HCT116 (cell line): ENCODE measurements at regions of chr12 and their contacts with region 1.

Region 1: DNA sequence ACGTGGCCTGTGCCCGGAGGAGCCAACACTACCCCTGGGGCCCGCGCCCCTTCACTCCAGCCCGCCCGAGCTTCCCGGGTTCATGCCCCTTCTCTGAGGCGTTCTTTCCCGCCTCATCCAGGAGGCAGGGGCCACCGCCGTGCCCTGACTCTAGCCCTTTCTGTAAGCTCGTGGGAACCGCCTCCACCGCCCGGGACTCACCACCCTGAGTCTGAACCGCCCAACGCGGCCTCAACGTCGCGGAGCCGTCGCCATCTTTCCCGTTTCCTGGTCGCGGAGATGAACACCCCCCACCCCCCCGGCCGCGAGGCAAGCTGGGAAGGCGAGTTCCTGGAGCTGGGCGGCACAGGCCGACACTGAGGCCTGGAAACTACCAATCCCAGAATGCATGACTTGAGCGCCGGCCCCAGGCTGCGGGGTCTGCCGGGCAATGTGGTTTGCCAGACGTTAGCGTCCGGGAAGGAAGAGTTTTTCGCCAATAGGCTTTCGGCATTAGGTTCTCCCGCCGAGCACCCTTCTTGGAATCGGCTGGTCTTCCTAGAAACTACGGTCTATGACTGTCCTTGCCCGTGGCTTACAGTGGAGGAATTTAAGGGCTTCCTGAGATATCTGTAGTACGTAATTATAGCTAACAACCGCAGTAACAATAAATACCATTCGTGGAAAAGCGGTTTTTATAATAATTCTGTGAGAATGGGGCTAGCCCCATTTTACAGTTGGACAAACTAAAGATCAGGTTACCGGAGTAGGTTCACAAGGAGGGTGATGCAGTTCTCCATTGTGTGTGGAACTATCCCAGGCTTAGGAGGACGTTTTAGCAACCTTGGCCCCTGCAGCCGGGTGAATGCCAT is at the start of gene DDX23:
- DNase-seq: peak; percentile 91
- ATAC-seq: peak; percentile 98
- H3K4me3 ChIP-seq: peak within 1 kb of the TSS; percentile 96 to 99
- H3K27ac ChIP-seq: peak within 1 kb of the TSS; percentile 63
- H3K4me1 ChIP-seq: peaks cover 10 to 15% of the 10 kb centered on the region in 2 experiments; a peak in 3 of 4 replicates
- H3K27me3 ChIP-seq: no peaks in the 10 kb centered on the region
- CTCF ChIP-seq: no peak
- POLR2A ChIP-seq: peak; percentile 55
- RAD21 ChIP-seq: no peak
- total RNA-seq, gene DDX23: 75.0 TPM

Region 2: DNA sequence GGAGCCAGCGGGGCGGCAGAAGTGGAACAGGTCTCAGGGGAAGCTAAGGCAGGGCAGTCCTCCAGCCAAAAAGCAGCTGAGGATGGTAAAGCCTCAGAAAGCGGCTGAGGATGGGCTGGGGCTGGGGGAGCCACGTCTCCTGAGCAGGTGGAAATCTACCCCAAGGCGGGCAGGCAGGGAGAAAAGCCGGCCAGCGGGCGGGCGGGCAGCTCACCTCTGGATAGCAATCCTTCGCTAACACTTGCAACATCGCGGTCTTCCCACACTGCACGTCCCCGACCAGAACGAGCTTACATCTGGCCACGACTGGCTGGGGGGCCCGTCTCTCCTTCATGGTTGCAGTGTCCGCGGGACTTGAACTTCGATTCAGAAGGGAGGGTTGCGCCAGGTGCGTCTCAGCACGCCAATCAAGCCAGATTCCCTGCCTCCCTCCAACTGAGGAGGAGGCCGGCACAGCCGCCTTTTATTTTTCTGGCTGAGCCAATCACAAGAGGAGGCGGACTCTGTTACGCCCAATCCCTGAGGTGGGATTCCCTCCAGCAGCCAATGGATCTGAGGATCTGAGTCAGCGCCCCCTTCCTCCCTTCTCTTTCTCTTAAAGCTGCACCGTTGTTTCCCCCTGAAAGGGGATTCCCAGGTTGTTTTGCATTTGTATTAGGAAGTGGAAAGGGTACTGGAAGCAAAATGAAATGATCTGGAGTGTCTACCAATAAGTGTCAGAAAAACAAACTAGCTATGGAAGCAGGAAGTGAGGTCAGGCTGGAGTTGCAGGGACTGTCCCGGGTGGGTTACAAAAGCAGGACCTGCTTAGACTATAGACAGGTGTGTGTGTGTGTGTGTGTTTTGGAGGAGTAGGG is 13.6 kb after region 1 on chr12 and contains the start of gene RND1:
- CTCF ChIA-PET with region 1: interaction called, 15 read pairs
- POLR2A ChIA-PET with region 1: interaction called, 28 read pairs
- RAD21 ChIA-PET with region 1: interaction called in 1 of 2 experiments, 4 read pairs
- intact Hi-C with region 1: no loop called
- DNase-seq: peak; percentile 89
- ATAC-seq: peak; percentile 99
- H3K4me3 ChIP-seq: peak within 1 kb of the TSS; percentile 52 to 60
- H3K27ac ChIP-seq: no peak within 1 kb of the TSS
- H3K4me1 ChIP-seq: peaks cover 3 to 18% of the 10 kb centered on the region in 2 experiments; a peak in 2 of 4 replicates
- H3K27me3 ChIP-seq: peaks cover 10% of the 10 kb centered on the region; the same call in 1 of the 2 replicates
- CTCF ChIP-seq: 0 out of 6 replicates have a peak, but pooled peaks of 1 of the 3 experiments have one; percentile 1
- POLR2A ChIP-seq: peak; percentile 98
- RAD21 ChIP-seq: no peak
- total RNA-seq, gene RND1: 2.0 TPM

Region 3: GRCh38 chr12:48890657-48891418 is 38.7 kb after region 1 on chr12:
- CTCF ChIA-PET with region 1: interaction called, 80 read pairs
- POLR2A ChIA-PET with region 1: interaction called, 3 read pairs
- RAD21 ChIA-PET with region 1: interaction called, 11 to 24 read pairs
- intact Hi-C with region 1: loop called (anchors 1 kb)
- DNase-seq: peak; percentile 27
- ATAC-seq: peak; percentile 97
- H3K4me3 ChIP-seq: no peak overlapping the region
- H3K27ac ChIP-seq: no peak overlapping the region
- H3K4me1 ChIP-seq: peaks cover 0 to 12% of the 10 kb centered on the region in 2 experiments; a peak in 2 of 4 replicates
- H3K27me3 ChIP-seq: peaks cover 3% of the 10 kb centered on the region; the same call in 1 of the 2 replicates
- CTCF ChIP-seq: peak; percentile 90 to 93 (median 92)
- POLR2A ChIP-seq: no peak
- RAD21 ChIP-seq: peak; percentile 84

Region 4: GRCh38 chr12:48936379-48936979 is 84.4 kb after region 1 on chr12:
- CTCF ChIA-PET with region 1: interaction called, 18 read pairs
- POLR2A ChIA-PET with region 1: no interaction called
- RAD21 ChIA-PET with region 1: no interaction called
- intact Hi-C with region 1: loop called (anchors 1 kb)
- DNase-seq: peak; percentile 36
- ATAC-seq: peak; percentile 89
- H3K4me3 ChIP-seq: no peak overlapping the region
- H3K27ac ChIP-seq: no peak overlapping the region
- H3K4me1 ChIP-seq: no peaks in the 10 kb centered on the region
- H3K27me3 ChIP-seq: no peaks in the 10 kb centered on the region
- CTCF ChIP-seq: peak; percentile 53 to 96 (median 94); a peak in 5 of 6 replicates
- POLR2A ChIP-seq: no peak
- RAD21 ChIP-seq: peak; percentile 61

Region 5: GRCh38 chr12:48977315-48978281 is 125.5 kb after region 1 on chr12:
- CTCF ChIA-PET with region 1: interaction called, 26 read pairs
- POLR2A ChIA-PET with region 1: no interaction called
- RAD21 ChIA-PET with region 1: interaction called, 3 read pairs
- intact Hi-C with region 1: loop called (anchors 1 kb)
- DNase-seq: no peak
- ATAC-seq: peak; percentile 88
- H3K4me3 ChIP-seq: no peak overlapping the region
- H3K27ac ChIP-seq: no peak overlapping the region
- H3K4me1 ChIP-seq: peaks cover 3 to 12% of the 10 kb centered on the region in 2 experiments; a peak in 3 of 4 replicates
- H3K27me3 ChIP-seq: peaks cover 3% of the 10 kb centered on the region; the same call in 1 of the 2 replicates
- CTCF ChIP-seq: peak; percentile 73 to 94 (median 87)
- POLR2A ChIP-seq: no peak
- RAD21 ChIP-seq: peak; percentile 43

Region 6: DNA sequence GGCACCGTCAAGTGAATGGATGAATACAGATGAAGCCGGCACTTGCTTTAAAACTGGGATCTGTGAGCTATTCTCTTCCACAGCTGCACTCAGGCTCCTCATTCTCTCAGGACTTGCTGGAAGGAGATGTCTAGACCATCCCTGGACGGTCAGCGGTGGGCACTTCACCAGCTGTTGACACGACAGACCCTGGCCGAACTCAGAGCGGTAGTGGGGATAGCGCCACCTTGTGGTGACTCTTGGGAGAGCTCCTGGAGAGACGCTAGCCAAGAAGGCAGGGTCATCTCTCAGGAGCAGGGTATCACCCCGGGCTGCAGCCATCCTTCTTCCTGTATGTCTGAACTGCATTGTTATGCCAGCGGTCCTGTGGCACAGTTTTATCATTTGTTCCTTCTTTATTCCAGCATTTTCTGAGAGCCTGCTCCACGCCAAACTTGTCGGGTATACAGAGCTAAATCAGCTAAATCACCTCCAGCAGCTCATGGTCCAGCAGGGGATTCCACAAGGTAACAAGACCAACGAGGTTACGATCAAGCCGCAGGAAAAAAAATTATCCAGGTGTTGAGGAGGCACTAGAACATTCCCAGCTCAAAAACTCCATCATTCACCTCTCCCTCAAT is 136.0 kb after region 1 on chr12:
- CTCF ChIA-PET with region 1: interaction called, 47 read pairs
- POLR2A ChIA-PET with region 1: interaction called, 3 read pairs
- RAD21 ChIA-PET with region 1: interaction called in 1 of 2 experiments, 6 read pairs
- intact Hi-C with region 1: no loop called
- DNase-seq: no peak
- ATAC-seq: peak; percentile 92
- H3K4me3 ChIP-seq: no peak overlapping the region
- H3K27ac ChIP-seq: no peak overlapping the region
- H3K4me1 ChIP-seq: peaks cover 0 to 14% of the 10 kb centered on the region in 2 experiments; a peak in 3 of 4 replicates
- H3K27me3 ChIP-seq: 0 out of 2 replicates have a peak, but pooled peaks cover 5% of the 10 kb centered on the region
- CTCF ChIP-seq: peak; percentile 58 to 95 (median 95); a peak in 5 of 6 replicates
- POLR2A ChIP-seq: no peak
- RAD21 ChIP-seq: peak; percentile 48

Region 7: GRCh38 chr12:48995061-48995879 is 143.2 kb after region 1 on chr12:
- CTCF ChIA-PET with region 1: interaction called, 15 read pairs
- POLR2A ChIA-PET with region 1: no interaction called
- RAD21 ChIA-PET with region 1: interaction called, 3 read pairs
- intact Hi-C with region 1: loop called (anchors 1 kb)
- DNase-seq: peak; percentile 71
- ATAC-seq: peak; percentile 70
- H3K4me3 ChIP-seq: peak overlapping the region; percentile 4 to 19; a peak in 2 of 4 replicates
- H3K27ac ChIP-seq: no peak overlapping the region
- H3K4me1 ChIP-seq: peaks cover 9 to 42% of the 10 kb centered on the region in 2 experiments
- H3K27me3 ChIP-seq: no peaks in the 10 kb centered on the region
- CTCF ChIP-seq: peak; percentile 74 to 80 (median 78)
- POLR2A ChIP-seq: no peak
- RAD21 ChIP-seq: peak; percentile 84

Region 8: GRCh38 chr12:49225556-49226181 is 373.6 kb after region 1 on chr12:
- CTCF ChIA-PET with region 1: no interaction called
- POLR2A ChIA-PET with region 1: no interaction called
- RAD21 ChIA-PET with region 1: no interaction called
- intact Hi-C with region 1: no loop called
- DNase-seq: no peak
- ATAC-seq: peak; percentile 89
- H3K4me3 ChIP-seq: no peak overlapping the region
- H3K27ac ChIP-seq: no peak overlapping the region
- H3K4me1 ChIP-seq: peaks cover 6 to 13% of the 10 kb centered on the region in 2 experiments; a peak in 3 of 4 replicates
- H3K27me3 ChIP-seq: no peaks in the 10 kb centered on the region
- CTCF ChIP-seq: peak in 1 of 3 experiments; percentile 26; a peak in 2 of 6 replicates
- POLR2A ChIP-seq: no peak
- RAD21 ChIP-seq: peak; percentile 43; the same call in 1 of the 2 replicates

Region 9: DNA sequence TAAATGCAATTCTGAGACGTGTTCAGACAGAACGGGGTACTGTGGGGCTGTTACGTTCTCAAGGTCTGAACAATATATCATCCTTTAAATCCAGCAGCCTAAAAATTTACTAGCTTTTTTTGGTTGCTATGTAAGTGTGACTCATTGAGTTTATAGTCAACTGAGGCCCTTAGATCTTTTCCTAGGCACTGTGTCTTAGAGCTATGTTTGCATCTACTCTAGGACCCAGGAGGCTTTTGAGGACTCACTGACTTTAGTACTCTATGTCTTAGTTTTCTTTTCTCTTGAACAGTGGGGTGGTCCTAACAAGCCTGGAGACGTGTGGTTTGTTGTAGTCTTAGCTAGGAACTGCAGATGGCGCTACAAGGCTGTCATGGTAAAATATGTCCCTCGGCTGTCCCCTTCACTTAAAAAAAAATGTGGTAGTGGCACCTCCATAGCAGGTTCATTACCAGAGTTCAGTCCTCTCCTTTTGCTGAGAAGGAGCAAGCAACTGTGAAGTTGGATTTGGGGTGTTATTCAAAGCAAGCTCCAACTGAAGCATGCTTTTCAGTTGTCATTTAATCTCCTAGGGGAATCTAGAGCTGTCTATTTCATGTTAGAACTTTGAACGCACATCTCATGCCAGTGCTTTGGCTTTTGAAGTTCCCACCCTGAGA is 506.5 kb after region 1 on chr12:
- CTCF ChIA-PET with region 1: no interaction called
- POLR2A ChIA-PET with region 1: no interaction called
- RAD21 ChIA-PET with region 1: no interaction called
- intact Hi-C with region 1: no loop called
- DNase-seq: peak; percentile 84
- ATAC-seq: peak; percentile 89
- H3K4me3 ChIP-seq: peak overlapping the region in 1 of 2 experiments; percentile 12; a peak in 1 of 4 replicates
- H3K27ac ChIP-seq: peak overlapping the region; percentile 38; the same call in 1 of the 2 replicates
- H3K4me1 ChIP-seq: peaks cover 30 to 35% of the 10 kb centered on the region in 2 experiments
- H3K27me3 ChIP-seq: no peaks in the 10 kb centered on the region
- CTCF ChIP-seq: peak; percentile 83 to 97 (median 92)
- POLR2A ChIP-seq: no peak
- RAD21 ChIP-seq: peak; percentile 98